Activated CD8-positive, alpha-beta T cell treated with anti-CD3 and anti-CD28 coated beads, Interleukin-2, amount 10 ng/mL, durations not matched to agents 7 days and 5 days (primary cell): ENCODE measurements at regions of chr12 and their contacts with region 1.

Region 1: GRCh38 chr12:54251667-54252284 is 28.1 kb downstream of the CBX5 start:
- DNase-seq: peak; percentile 31
- ATAC-seq: peak; percentile 53
- H3K4me3 Mint-ChIP-seq: no peak overlapping the region
- H3K27ac Mint-ChIP-seq: no peak overlapping the region
- H3K4me1 Mint-ChIP-seq: no peaks in the 10 kb centered on the region
- H3K27me3 Mint-ChIP-seq: no peaks in the 10 kb centered on the region

Region 2: DNA sequence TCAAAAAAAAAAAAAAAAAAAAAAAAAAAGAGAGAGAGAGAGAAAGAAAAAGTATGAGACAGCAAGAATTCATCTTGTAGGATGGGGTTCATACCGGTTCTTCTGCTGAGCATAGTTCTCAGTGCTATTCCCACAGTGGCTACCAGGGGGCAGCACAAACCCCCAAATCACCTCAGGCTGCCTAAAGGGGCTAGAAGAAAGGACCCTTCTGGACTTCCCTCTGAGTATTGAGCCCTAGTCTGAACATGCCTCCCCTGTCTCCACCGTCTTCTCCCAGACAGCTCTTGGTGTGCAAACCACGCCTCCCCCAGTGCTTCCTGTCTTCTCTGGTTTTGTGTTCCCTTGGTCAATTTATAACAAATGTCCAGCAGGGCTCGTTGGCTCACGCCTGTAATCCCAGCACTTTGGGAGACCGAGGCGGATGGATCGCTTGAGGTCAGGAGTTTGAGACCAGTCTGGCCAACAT is 31.7 kb before region 1 on chr12:
- CTCF ChIA-PET with region 1: interaction called, 10 read pairs
- POLR2A ChIA-PET with region 1: no interaction called
- DNase-seq: peak; percentile 78
- ATAC-seq: peak; percentile 45
- H3K4me3 Mint-ChIP-seq: no peak overlapping the region
- H3K27ac Mint-ChIP-seq: no peak overlapping the region
- H3K4me1 Mint-ChIP-seq: peaks cover 31% of the 10 kb centered on the region
- H3K27me3 Mint-ChIP-seq: peaks cover 18% of the 10 kb centered on the region

Region 3: DNA sequence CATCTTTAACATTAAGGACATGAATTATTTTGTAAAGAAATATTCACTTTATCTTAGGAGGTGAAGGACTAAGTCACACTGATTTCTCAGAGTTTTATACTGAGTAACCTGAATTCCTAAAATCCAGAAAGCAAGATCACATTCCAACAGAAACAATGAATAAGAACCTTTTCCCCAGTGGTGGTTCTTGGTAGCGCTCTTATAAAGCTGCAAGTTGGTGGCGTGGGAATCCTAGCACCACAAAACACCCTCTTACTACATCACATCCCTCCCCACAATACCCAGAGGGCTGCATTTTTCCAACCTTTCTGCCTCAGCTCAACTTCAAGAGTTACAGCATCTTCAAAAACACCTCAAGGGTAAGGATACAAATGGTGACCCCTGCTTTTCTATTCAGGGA is 19.0 kb before region 1 on chr12:
- CTCF ChIA-PET with region 1: interaction called, 11 read pairs
- POLR2A ChIA-PET with region 1: no interaction called
- DNase-seq: no peak
- ATAC-seq: no peak
- H3K4me3 Mint-ChIP-seq: no peak overlapping the region
- H3K27ac Mint-ChIP-seq: no peak overlapping the region
- H3K4me1 Mint-ChIP-seq: peaks cover 25% of the 10 kb centered on the region
- H3K27me3 Mint-ChIP-seq: no peaks in the 10 kb centered on the region

Region 4: GRCh38 chr12:54240971-54241588 is 10.7 kb before region 1 on chr12:
- CTCF ChIA-PET with region 1: interaction called, 12 read pairs
- POLR2A ChIA-PET with region 1: no interaction called
- DNase-seq: no peak
- ATAC-seq: no peak
- H3K4me3 Mint-ChIP-seq: no peak overlapping the region
- H3K27ac Mint-ChIP-seq: peak overlapping the region; percentile 54
- H3K4me1 Mint-ChIP-seq: peaks cover 17% of the 10 kb centered on the region
- H3K27me3 Mint-ChIP-seq: no peaks in the 10 kb centered on the region

Region 5: DNA sequence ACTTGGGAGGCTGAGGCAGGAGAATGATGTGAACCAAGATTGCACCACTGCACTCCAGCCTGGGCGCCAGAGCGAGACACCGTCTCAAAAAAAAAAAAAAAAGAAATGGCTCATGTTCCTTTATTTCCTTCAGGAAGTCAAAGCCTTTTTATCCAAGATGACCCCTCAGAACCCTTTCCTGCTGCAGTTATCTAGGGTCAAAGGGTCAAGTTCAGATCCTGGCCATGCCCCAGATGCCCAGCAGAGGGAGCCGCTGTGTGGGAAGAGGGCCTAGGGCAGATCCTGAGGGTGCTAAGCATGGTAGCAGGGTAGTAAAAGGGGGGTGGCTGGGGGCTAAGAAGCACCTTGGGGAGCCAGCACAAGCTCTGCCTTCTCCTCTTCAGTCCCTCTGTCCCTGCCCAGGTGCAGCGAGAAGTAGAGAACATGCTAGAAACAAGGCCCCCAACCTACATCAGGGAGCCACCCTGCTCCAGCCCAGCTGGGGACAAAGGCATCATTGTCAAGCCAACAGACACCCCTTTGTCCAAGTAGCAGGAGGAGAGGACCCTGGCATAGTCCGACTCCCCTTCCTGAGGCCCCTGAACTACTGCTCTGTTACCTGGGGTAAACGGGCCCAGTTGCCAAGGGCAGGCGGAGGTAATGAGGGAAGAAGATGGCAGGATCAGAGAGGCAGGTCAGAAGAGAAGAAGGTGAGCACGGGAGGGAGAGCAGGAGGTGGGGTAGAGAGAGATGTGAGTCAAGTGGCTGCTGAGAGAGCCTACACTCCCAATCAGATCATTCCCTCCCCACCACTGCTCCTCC is 42.6 kb after region 1 on chr12:
- CTCF ChIA-PET with region 1: interaction called, 10 read pairs
- POLR2A ChIA-PET with region 1: no interaction called
- DNase-seq: peak; percentile 76
- ATAC-seq: peak; percentile 58
- H3K4me3 Mint-ChIP-seq: no peak overlapping the region
- H3K27ac Mint-ChIP-seq: no peak overlapping the region
- H3K4me1 Mint-ChIP-seq: peaks cover 5% of the 10 kb centered on the region
- H3K27me3 Mint-ChIP-seq: peaks cover 18% of the 10 kb centered on the region

Region 6: DNA sequence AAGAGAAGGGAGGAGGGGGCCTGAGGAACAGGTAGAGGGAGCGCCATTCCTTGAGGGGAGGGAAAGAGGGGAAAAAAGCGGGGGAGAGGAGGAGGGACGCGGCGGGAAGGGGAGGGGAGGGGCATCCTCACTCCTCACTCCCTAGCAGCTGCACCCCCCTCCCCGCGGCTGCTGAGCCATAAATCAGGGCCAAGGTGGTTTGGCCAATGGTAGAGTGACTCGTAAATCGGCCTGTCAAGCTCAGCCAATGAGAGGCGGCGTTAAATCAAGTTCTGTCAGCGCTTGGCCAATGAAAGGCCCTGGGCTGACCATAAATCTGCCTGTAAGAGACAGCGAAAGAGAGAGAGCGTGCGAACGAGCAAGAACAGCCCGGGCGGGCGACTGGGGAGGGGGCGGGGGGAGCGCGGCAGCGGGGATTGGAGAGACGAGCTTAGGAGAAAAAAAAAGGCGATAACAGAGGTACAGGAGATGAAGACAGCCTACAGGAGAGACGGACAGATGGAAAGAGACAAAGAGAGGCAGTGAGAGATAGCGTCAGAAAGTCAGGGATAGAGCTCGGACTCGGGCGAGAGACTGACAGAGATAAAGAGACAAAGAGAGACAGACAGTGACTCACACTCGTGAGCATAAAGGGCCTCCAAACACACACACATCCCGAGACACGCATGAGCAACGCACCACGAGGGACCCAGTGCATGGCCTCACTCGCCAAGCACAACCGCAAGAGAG is 107.4 kb after region 1 on chr12:
- CTCF ChIA-PET with region 1: interaction called, 10 read pairs
- POLR2A ChIA-PET with region 1: no interaction called
- DNase-seq: peak; percentile 98
- ATAC-seq: peak; percentile 96
- H3K4me3 Mint-ChIP-seq: no peak overlapping the region
- H3K27ac Mint-ChIP-seq: no peak overlapping the region
- H3K4me1 Mint-ChIP-seq: peaks cover 30% of the 10 kb centered on the region
- H3K27me3 Mint-ChIP-seq: no peaks in the 10 kb centered on the region

Region 7: GRCh38 chr12:54368709-54369583 is 117.2 kb after region 1 on chr12:
- CTCF ChIA-PET with region 1: interaction called, 16 read pairs
- POLR2A ChIA-PET with region 1: no interaction called
- DNase-seq: peak; percentile 93
- ATAC-seq: peak; percentile 89
- H3K4me3 Mint-ChIP-seq: no peak overlapping the region
- H3K27ac Mint-ChIP-seq: peak overlapping the region; percentile 32
- H3K4me1 Mint-ChIP-seq: peaks cover 52% of the 10 kb centered on the region
- H3K27me3 Mint-ChIP-seq: peaks cover 4% of the 10 kb centered on the region

Region 8: GRCh38 chr12:54421175-54421872 is 169.5 kb after region 1 on chr12:
- CTCF ChIA-PET with region 1: no interaction called
- POLR2A ChIA-PET with region 1: no interaction called
- DNase-seq: no peak
- ATAC-seq: no peak
- H3K4me3 Mint-ChIP-seq: no peak overlapping the region
- H3K27ac Mint-ChIP-seq: peak overlapping the region; percentile 44
- H3K4me1 Mint-ChIP-seq: peaks cover 36% of the 10 kb centered on the region
- H3K27me3 Mint-ChIP-seq: peaks cover 43% of the 10 kb centered on the region